Caco-2 (cell line): ENCODE measurements at regions of chr17 and their contacts with region 1.

Region 1: DNA sequence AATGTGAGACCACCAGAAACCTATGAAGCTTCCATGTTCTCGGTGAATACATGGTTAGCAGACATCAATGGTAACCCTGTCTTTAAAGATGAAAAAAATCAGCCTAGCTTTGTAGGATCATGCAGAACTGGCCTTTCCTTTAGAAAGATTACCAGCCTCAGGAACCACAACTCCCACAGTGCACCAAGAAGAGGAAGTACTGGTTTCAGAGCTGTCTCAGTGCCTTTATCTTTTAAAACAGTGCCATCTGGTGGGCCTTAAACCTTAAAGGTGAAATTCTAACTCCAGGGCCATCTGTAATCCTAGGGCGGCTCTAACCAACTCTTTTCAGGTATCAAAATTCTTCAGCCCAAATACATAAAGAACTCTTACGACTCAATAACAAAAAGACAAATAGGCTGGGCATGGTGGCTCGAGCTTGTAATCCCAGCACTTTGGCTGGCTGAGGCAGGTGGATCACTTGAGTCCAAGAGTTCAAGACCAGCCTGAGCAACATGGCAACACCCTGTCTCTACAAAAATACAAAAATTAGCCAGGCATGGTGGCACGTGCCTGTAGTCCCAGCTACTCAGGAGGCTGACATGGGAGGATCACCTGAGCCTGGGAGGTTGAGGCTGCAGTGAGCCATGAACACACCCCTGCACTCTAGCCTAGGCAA is 5.4 kb downstream of the ATPAF2 start:
- DNase-seq: peak; percentile 66 to 75
- H3K4me3 ChIP-seq: no peak overlapping the region
- H3K4me3 Mint-ChIP-seq: no peak overlapping the region
- H3K27ac Mint-ChIP-seq: no peak overlapping the region
- H3K4me1 ChIP-seq: peaks cover 11% of the 10 kb centered on the region
- H3K4me1 Mint-ChIP-seq: peaks cover 14% of the 10 kb centered on the region
- H3K27me3 ChIP-seq: no peaks in the 10 kb centered on the region
- H3K27me3 Mint-ChIP-seq: no peaks in the 10 kb centered on the region
- CTCF ChIP-seq: peak; percentile 75 to 81

Region 2: DNA sequence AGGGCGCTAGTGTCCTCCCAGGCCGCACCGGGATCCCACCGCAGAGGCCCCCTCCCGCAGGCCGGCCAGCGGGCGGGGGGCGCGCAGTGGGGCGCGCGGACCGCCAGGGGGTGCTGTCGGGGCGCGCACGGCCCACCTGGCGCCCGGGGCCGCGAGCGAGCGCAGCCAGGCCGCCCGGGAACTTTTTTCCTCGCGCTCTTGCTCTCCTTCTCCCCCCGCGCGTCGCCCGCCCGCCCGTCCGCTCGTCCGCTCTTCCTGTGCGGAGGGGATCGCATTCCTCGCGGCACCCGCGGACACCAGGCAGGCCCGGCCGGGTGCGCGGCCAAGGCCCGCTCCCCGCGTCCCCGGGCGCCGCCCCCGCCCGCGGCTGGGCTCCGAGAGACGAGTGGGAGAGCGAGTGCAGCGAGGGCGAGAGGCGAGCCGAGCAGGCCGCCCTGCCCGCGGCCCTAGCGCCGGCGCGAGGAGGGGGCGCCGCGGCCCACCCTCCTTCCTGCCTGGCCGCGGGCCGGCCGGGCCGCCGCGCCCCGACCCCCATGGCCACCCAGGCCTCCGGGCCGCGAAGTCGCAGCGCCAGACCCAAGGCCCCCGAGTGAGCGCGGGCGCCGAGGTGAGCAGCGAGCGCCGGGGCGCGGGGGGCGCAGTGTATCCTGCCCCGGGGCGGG is 352.3 kb before region 1 on chr17 and contains the start of gene RAI1:
- CTCF ChIA-PET with region 1: no interaction called
- POLR2A ChIA-PET with region 1: no interaction called
- intact Hi-C with region 1: loop called (anchors 2 kb)
- DNase-seq: peak; percentile 72 to 88
- H3K4me3 ChIP-seq: peak within 1 kb of the TSS; percentile 96
- H3K4me3 Mint-ChIP-seq: peak within 1 kb of the TSS; percentile 90
- H3K27ac Mint-ChIP-seq: peak within 1 kb of the TSS; percentile 96
- H3K4me1 ChIP-seq: peaks cover 24% of the 10 kb centered on the region
- H3K4me1 Mint-ChIP-seq: peaks cover 27% of the 10 kb centered on the region
- H3K27me3 ChIP-seq: no peaks in the 10 kb centered on the region
- H3K27me3 Mint-ChIP-seq: no peaks in the 10 kb centered on the region
- CTCF ChIP-seq: peak; percentile 30 to 83
- total RNA-seq, gene RAI1: 44.3 and 46.7 TPM in 2 replicates

Region 3: GRCh38 chr17:17804007-17804406 is 229.6 kb before region 1 on chr17:
- CTCF ChIA-PET with region 1: no interaction called
- POLR2A ChIA-PET with region 1: no interaction called
- intact Hi-C with region 1: no loop called
- DNase-seq: no peak
- H3K4me3 ChIP-seq: no peak overlapping the region
- H3K4me3 Mint-ChIP-seq: no peak overlapping the region
- H3K27ac Mint-ChIP-seq: peak overlapping the region; percentile 8
- H3K4me1 ChIP-seq: no peaks in the 10 kb centered on the region
- H3K4me1 Mint-ChIP-seq: no peaks in the 10 kb centered on the region
- H3K27me3 ChIP-seq: no peaks in the 10 kb centered on the region
- H3K27me3 Mint-ChIP-seq: no peaks in the 10 kb centered on the region
- CTCF ChIP-seq: no peak

Region 4: DNA sequence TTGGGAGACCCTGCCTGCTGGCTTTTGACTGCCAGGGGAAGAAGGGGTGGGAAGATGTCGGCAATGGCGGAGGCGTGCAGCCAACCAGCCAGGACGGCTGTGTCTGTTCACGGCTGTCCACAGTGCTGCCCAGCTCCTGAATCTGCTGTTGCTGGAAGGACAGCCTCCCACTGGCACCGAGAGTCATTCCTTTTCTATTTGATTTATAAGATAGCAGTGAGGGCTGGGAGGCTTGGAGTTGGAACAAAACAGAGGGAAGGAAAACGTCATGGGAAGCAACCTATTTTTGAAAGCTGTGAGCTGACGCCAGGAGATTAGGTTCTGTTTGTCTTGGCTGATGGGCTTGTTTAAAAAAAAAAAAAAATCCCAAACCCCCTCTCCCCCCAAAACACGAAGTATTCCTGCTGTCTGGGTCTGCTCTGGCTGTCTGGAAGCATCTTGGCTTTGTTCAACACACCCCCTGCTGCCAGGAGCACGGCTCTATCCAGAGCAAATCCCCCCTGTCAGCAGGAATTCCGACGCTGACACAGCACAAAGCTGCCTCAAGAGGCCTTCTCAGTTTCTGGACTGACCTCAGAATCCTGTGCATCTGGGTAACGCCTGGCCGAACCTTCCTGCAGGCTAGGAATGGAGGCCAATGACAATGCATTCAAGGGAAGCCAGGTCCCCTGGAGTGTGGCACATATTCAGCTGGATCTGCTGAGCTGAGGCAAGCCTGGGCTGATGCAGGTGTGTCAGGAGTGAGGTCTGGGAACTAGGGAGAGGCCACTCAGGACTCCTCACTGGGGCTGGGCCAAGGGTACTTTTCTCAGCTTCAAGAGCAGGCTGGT is 155.8 kb before region 1 on chr17:
- CTCF ChIA-PET with region 1: no interaction called
- POLR2A ChIA-PET with region 1: no interaction called
- intact Hi-C with region 1: loop called (anchors 5 kb)
- DNase-seq: no peak
- H3K4me3 ChIP-seq: no peak overlapping the region
- H3K4me3 Mint-ChIP-seq: no peak overlapping the region
- H3K27ac Mint-ChIP-seq: no peak overlapping the region
- H3K4me1 ChIP-seq: no peaks in the 10 kb centered on the region
- H3K4me1 Mint-ChIP-seq: no peaks in the 10 kb centered on the region
- H3K27me3 ChIP-seq: no peaks in the 10 kb centered on the region
- H3K27me3 Mint-ChIP-seq: no peaks in the 10 kb centered on the region
- CTCF ChIP-seq: no peak

Region 5: GRCh38 chr17:17890773-17891759 is 142.5 kb before region 1 on chr17:
- CTCF ChIA-PET with region 1: interaction called, 16 read pairs
- POLR2A ChIA-PET with region 1: no interaction called
- intact Hi-C with region 1: loop called (anchors 1 kb)
- DNase-seq: peak; percentile 78 to 81
- H3K4me3 ChIP-seq: no peak overlapping the region
- H3K4me3 Mint-ChIP-seq: no peak overlapping the region
- H3K27ac Mint-ChIP-seq: no peak overlapping the region
- H3K4me1 ChIP-seq: no peaks in the 10 kb centered on the region; the same call in 1 of the 2 replicates
- H3K4me1 Mint-ChIP-seq: peaks cover 5% of the 10 kb centered on the region
- H3K27me3 ChIP-seq: no peaks in the 10 kb centered on the region
- H3K27me3 Mint-ChIP-seq: no peaks in the 10 kb centered on the region
- CTCF ChIP-seq: peak; percentile 89 to 97

Region 6: GRCh38 chr17:17950806-17951205 is 82.8 kb before region 1 on chr17:
- CTCF ChIA-PET with region 1: no interaction called
- POLR2A ChIA-PET with region 1: no interaction called
- intact Hi-C with region 1: loop called (anchors 2 kb)
- DNase-seq: peak in 1 of 2 experiments; percentile 56
- H3K4me3 ChIP-seq: no peak overlapping the region
- H3K4me3 Mint-ChIP-seq: no peak overlapping the region
- H3K27ac Mint-ChIP-seq: no peak overlapping the region
- H3K4me1 ChIP-seq: peaks cover 16% of the 10 kb centered on the region
- H3K4me1 Mint-ChIP-seq: peaks cover 9% of the 10 kb centered on the region
- H3K27me3 ChIP-seq: no peaks in the 10 kb centered on the region
- H3K27me3 Mint-ChIP-seq: no peaks in the 10 kb centered on the region
- CTCF ChIP-seq: peak; percentile 44 to 72

Region 7: GRCh38 chr17:17985555-17985954 is 48.0 kb before region 1 on chr17:
- CTCF ChIA-PET with region 1: interaction called, 3 read pairs
- POLR2A ChIA-PET with region 1: no interaction called
- intact Hi-C with region 1: loop called (anchors 5 kb)
- DNase-seq: no peak
- H3K4me3 ChIP-seq: no peak overlapping the region
- H3K4me3 Mint-ChIP-seq: no peak overlapping the region
- H3K27ac Mint-ChIP-seq: no peak overlapping the region
- H3K4me1 ChIP-seq: peaks cover 10% of the 10 kb centered on the region
- H3K4me1 Mint-ChIP-seq: peaks cover 5% of the 10 kb centered on the region
- H3K27me3 ChIP-seq: no peaks in the 10 kb centered on the region
- H3K27me3 Mint-ChIP-seq: no peaks in the 10 kb centered on the region
- CTCF ChIP-seq: peak in 1 of 2 experiments; percentile 15

Region 8: GRCh38 chr17:18000030-18000408 is 33.6 kb before region 1 on chr17:
- CTCF ChIA-PET with region 1: no interaction called
- POLR2A ChIA-PET with region 1: no interaction called
- intact Hi-C with region 1: no loop called
- DNase-seq: no peak
- H3K4me3 ChIP-seq: no peak overlapping the region
- H3K4me3 Mint-ChIP-seq: no peak overlapping the region
- H3K27ac Mint-ChIP-seq: no peak overlapping the region
- H3K4me1 ChIP-seq: no peaks in the 10 kb centered on the region
- H3K4me1 Mint-ChIP-seq: no peaks in the 10 kb centered on the region
- H3K27me3 ChIP-seq: no peaks in the 10 kb centered on the region
- H3K27me3 Mint-ChIP-seq: no peaks in the 10 kb centered on the region
- CTCF ChIP-seq: no peak